ENCODE measurements at regions of chr1 and their contacts with region 1.

Region 1: DNA sequence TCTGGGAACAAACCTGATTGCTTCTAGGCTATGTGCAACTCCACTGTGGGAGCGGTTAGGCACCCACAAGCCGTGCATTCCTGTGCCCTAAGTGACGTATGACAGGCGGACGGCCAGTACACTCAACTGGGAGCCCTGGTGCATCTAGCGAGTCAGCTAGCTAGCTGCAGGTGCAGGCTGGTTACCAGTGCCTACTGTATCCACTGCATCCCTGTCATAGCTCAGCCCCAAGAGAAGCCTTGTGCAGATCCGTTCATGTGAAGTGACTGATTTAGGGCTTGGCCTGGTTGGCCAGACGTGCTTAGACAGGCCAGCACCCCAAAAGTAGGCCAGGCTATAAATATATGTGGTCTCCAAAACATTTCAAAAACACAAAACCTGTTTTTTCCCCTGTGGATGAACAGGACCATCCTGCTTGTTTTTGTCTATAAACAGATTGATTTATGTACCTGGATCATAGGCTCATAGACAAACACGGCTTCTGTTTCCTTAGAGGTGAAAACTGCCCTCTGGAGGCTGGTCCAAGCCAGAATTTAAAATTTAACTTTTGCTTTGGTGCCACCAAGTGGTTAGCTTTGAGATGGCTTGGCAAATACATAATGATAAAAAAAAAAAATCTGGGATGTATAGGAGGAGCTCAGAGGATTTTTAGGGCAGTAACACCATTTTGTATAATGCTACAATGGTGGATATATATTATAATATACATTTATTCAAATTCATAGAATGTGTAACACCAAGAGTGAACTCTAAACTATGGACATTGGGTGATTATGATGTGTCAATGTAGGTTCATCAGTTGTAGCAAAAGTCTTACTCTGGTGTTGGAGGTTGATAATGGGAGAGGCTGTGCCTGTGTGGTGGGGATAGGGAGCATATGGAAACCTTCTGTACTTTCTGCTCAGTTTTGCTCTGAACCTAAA is 68.5 kb downstream of the GIPC2 start:
- DNase-seq: peak; percentile 79
- H3K4me3 Mint-ChIP-seq: no peak overlapping the region
- H3K27ac Mint-ChIP-seq: no peak overlapping the region
- H3K4me1 Mint-ChIP-seq: peaks cover 8% of the 10 kb centered on the region
- H3K27me3 Mint-ChIP-seq: no peaks in the 10 kb centered on the region

Region 2: GRCh38 chr1:76901158-76901767 is 1213.0 kb before region 1 on chr1:
- CTCF ChIA-PET with region 1: no interaction called
- intact Hi-C with region 1: loop called (anchors 1 kb)
- DNase-seq: peak; percentile 57
- H3K4me3 Mint-ChIP-seq: no peak overlapping the region
- H3K27ac Mint-ChIP-seq: no peak overlapping the region
- H3K4me1 Mint-ChIP-seq: no peaks in the 10 kb centered on the region
- H3K27me3 Mint-ChIP-seq: no peaks in the 10 kb centered on the region

Region 3: DNA sequence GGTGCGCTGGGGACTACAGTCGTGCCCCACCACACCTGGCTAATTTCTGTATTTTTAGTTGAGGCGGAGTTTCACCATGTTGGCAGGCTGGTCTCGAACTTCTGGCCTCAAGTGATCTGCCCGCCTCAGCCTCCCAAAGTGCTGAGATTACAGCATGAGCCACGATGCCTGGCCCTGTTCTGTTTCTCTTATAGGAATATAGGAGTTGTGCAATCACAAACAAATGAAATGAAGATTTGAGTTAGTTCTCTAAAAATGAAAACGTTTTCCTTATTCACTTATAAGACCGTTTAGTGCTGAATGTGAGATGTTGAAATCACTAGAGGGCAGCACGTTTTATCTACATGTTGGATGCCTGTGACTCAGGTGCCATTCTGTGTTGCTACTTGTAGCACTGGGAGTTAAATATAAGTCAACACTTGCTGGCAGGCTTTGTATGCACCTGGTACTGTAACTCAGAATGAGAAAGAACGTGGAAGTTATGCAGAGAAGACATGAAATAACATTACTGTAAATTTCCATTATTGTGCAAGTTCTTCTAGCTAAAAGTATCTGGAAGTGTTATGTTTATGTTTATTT is 289.1 kb before region 1 on chr1:
- CTCF ChIA-PET with region 1: interaction called, 9 read pairs
- intact Hi-C with region 1: loop called (anchors 1 kb)
- DNase-seq: peak; percentile 42
- H3K4me3 Mint-ChIP-seq: no peak overlapping the region
- H3K27ac Mint-ChIP-seq: no peak overlapping the region
- H3K4me1 Mint-ChIP-seq: no peaks in the 10 kb centered on the region
- H3K27me3 Mint-ChIP-seq: no peaks in the 10 kb centered on the region

Region 4: DNA sequence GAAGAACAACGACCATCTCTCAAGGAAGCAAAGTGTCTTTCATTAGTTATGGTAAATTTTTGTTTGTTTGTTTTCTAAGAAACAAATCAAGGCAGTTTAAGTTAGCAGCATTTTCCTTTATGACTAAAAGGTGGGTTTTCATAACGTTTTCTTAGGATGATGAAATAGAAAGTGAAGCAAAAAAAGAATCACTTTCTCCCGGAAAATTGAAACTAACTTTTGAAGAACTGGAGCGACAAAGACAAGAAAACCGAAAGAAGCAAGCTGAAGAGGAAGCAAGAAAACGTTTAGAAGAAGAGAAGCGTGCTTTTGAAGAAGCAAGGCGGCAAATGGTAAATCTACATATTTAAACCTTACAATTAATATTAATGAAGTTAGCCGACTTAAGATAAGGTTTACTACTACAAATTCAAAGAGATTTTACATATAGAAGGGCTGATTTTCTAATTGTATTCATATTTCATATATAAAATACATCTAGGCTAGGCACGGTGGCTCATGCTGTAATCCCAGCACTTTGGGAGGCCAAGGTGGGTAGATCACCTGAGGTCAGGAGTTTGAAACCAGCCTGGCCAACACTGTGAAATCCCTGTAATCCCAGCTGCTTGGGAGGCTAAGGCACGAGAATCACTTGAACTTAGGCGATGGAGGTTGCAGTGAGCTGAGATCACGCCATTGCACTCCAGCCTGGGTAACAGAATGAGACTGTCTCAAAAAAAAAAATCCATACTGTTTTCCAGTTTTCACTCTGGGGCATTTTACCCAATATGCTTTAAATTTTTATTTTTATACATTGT is 187.5 kb before region 1 on chr1:
- CTCF ChIA-PET with region 1: interaction called, 4 read pairs
- intact Hi-C with region 1: loop called (anchors 2 kb)
- DNase-seq: no peak
- H3K4me3 Mint-ChIP-seq: peak overlapping the region; percentile 70
- H3K27ac Mint-ChIP-seq: peak overlapping the region; percentile 69
- H3K4me1 Mint-ChIP-seq: peaks cover 10% of the 10 kb centered on the region
- H3K27me3 Mint-ChIP-seq: no peaks in the 10 kb centered on the region

Measured in activated naive CD4-positive, alpha-beta T cell treated with anti-CD3 and anti-CD28 coated beads for 36 hours (primary cell).